AG04450 (cell line): ENCODE measurements at regions of chr3 and their contacts with region 1.

Region 1: GRCh38 chr3:47989981-47990440 is 26.2 kb downstream of the MAP4 start:
- DNase-seq: peak; percentile 88
- H3K4me3 ChIP-seq: no peak overlapping the region
- H3K27ac ChIP-seq: no peak overlapping the region
- H3K27me3 ChIP-seq: no peaks in the 10 kb centered on the region
- CTCF ChIP-seq: peak; percentile 89

Region 2: DNA sequence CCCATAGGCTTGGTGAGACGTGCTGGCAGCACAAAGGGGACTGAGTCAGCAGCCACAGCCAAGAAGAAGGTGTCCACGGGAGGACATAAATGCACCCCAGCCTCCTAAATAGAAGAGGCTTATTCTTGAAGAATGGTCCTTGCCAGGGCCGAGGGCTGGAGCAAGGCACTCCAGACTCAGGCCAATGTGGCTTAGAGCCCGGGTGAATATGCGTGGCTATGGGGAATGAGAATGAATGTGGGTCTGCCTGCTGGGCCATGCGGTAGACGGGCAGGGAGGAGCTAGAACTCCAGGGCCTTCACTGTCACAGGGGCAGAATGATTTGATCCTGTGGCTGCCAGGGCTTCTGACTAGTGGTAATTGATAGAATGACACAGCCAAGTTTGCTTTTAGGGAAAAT is 153.0 kb before region 1 on chr3:
- CTCF ChIA-PET with region 1: interaction called, 13 read pairs
- POLR2A ChIA-PET with region 1: interaction called, 4 read pairs
- DNase-seq: no peak
- H3K4me3 ChIP-seq: no peak overlapping the region
- H3K27ac ChIP-seq: no peak overlapping the region
- H3K27me3 ChIP-seq: no peaks in the 10 kb centered on the region
- CTCF ChIP-seq: no peak

Region 3: GRCh38 chr3:47976135-47976732 is 13.8 kb before region 1 on chr3:
- CTCF ChIA-PET with region 1: interaction called, 16 read pairs
- POLR2A ChIA-PET with region 1: no interaction called
- DNase-seq: no peak
- H3K4me3 ChIP-seq: no peak overlapping the region
- H3K27ac ChIP-seq: no peak overlapping the region
- H3K27me3 ChIP-seq: no peaks in the 10 kb centered on the region
- CTCF ChIP-seq: no peak

Region 4: GRCh38 chr3:48013288-48013980 is 23.4 kb after region 1 on chr3:
- CTCF ChIA-PET with region 1: interaction called, 20 read pairs
- POLR2A ChIA-PET with region 1: interaction called, 4 read pairs
- DNase-seq: peak; percentile 55
- H3K4me3 ChIP-seq: no peak overlapping the region
- H3K27ac ChIP-seq: peak overlapping the region; percentile 48
- H3K27me3 ChIP-seq: no peaks in the 10 kb centered on the region
- CTCF ChIP-seq: no peak

Region 5: GRCh38 chr3:48130321-48130904 is 140.4 kb after region 1 on chr3:
- CTCF ChIA-PET with region 1: no interaction called
- POLR2A ChIA-PET with region 1: no interaction called
- DNase-seq: peak; percentile 72
- H3K4me3 ChIP-seq: no peak overlapping the region
- H3K27ac ChIP-seq: peak overlapping the region; percentile 84
- H3K27me3 ChIP-seq: no peaks in the 10 kb centered on the region
- CTCF ChIP-seq: no peak

Region 6: DNA sequence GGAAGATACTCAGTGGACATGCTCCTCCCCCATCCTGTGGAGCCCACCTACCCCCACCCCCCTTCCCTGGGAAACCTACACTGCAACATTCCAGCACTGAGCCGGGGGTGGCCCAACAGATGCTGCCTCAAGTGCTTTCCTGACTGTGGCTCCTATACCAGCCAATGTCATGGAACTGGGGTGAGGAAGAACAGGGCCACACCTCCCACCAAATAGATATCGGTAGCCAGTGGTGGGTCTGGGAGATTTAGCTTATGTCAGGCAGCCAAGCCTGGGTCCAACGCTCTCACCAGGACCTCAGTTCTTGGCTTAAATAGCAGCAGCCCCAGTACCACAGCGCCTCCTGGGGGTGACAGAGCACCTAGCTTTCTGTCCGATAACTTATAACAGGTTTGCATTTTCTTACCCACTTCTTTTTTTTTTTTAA is 168.0 kb after region 1 on chr3:
- CTCF ChIA-PET with region 1: interaction called, 17 read pairs
- POLR2A ChIA-PET with region 1: no interaction called
- DNase-seq: peak; percentile 33
- H3K4me3 ChIP-seq: no peak overlapping the region
- H3K27ac ChIP-seq: no peak overlapping the region
- H3K27me3 ChIP-seq: no peaks in the 10 kb centered on the region
- CTCF ChIP-seq: peak; percentile 83